ENCODE measurements at regions of chr9 and their contacts with region 1.

Region 1: DNA sequence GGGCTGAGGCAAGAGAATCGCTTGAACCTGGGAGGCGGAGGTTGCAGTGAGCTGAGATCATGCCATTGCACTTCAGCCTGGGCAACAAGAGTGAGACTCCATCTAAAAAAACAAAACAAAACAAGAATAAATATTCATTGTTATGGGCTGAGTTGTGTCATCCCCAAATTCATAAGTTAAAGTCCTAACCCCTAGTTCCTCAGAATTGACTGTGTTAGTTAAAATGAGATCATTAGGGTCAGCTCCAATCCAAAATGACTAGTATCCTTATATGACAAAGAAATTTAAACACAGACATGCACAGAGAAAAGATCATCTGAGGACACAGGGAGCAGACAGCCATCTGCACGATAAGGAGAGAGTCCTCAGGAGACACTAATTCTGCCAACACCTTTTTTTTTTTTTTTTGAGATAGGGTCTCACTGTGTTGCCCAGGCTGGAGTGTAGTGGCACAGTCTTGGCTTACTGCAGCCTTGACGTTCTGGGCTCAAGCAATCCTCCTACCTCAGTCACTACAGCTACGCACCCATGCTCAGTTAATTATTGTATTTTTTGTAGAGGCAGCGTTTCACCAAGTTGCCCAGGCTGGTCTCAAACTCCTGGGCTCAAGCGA is 32.1 kb upstream of the GCNT1 start:
- DNase-seq: no peak
- H3K4me3 ChIP-seq: no peak overlapping the region
- CTCF ChIP-seq: no peak

Region 2: GRCh38 chr9:76127637-76128036 is 299.3 kb before region 1 on chr9:
- CTCF ChIA-PET with region 1: no interaction called
- POLR2A ChIA-PET with region 1: no interaction called
- DNase-seq: no peak
- H3K4me3 ChIP-seq: no peak overlapping the region
- CTCF ChIP-seq: no peak

Region 3: GRCh38 chr9:76269818-76270217 is 157.1 kb before region 1 on chr9:
- CTCF ChIA-PET with region 1: no interaction called
- POLR2A ChIA-PET with region 1: no interaction called
- DNase-seq: no peak
- H3K4me3 ChIP-seq: no peak overlapping the region
- CTCF ChIP-seq: no peak

Region 4: GRCh38 chr9:76441551-76442322 is 14.8 kb after region 1 on chr9:
- CTCF ChIA-PET with region 1: interaction called, 20 read pairs
- POLR2A ChIA-PET with region 1: no interaction called
- DNase-seq: no peak
- H3K4me3 ChIP-seq: no peak overlapping the region
- CTCF ChIP-seq: no peak

Region 5: DNA sequence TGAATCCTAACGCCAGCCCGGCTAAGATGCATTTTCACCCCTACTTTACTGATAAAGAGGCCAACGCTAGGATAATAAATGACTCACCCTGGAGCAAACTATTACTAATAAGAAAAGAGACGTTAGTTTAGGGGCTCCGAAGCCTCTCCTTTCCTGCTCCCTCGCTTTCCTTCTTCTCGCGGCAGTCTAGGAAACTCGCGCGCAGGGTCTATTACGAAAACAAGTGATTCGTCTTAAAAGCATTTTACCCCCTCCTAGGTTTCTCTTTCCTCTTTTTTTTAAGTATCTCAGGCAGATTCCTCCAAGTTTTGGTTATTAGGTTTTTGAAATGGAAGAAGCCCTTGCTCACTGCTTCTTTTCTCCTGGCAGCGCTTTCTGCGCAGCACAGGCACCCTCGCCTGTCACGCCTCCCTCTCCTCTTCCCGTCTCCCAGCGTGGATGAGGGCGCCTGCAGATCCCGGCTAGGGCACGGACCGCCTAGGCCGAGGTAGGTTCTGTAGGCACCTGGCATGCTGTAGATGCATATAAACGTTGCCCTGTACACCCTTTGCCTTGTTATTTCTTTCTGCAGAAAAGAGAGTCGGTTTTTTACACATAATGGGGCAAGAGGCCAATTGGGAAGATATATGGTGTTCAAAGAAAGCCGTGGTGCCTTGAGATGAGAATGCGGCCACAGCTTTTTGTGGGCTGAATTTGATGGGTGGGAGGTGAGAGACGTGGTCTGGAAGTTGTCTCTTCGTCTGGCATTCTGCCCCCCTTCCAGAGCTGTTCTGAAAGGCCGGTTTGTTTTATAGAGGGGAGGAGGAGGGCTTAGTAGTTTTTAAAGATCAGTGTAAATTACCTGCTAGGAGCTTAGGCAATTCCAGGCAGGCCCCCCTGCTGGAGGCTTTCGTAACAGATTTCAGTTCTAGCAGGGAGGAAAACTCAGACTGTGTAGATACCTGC is 33.0 kb after region 1 on chr9:
- CTCF ChIA-PET with region 1: no interaction called
- POLR2A ChIA-PET with region 1: no interaction called
- DNase-seq: no peak
- H3K4me3 ChIP-seq: peak overlapping the region; percentile 84
- CTCF ChIP-seq: peak; percentile 21

Measured in AG04449 (cell line).